ENCODE measurements at regions of chr18 and their contacts with region 1.

Region 1: GRCh38 chr18:59139371-59140298 is at the start of gene SEC11C:
- DNase-seq: peak; percentile 98 to 99 (median 98)
- H3K4me3 ChIP-seq: peak within 1 kb of the TSS; percentile 70 to 99 (median 91)
- H3K27ac ChIP-seq: peak within 1 kb of the TSS; percentile 52 to 96 (median 88)
- H3K27me3 ChIP-seq: peaks cover 0 to 5% (median 0%) of the 10 kb centered on the region in 45 donors
- CTCF ChIP-seq: peak in 15 of 56 donors; percentile 6 to 48 (median 20)
- total RNA-seq, gene SEC11C: 57.2 to 173 (median 101) TPM

Region 2: DNA sequence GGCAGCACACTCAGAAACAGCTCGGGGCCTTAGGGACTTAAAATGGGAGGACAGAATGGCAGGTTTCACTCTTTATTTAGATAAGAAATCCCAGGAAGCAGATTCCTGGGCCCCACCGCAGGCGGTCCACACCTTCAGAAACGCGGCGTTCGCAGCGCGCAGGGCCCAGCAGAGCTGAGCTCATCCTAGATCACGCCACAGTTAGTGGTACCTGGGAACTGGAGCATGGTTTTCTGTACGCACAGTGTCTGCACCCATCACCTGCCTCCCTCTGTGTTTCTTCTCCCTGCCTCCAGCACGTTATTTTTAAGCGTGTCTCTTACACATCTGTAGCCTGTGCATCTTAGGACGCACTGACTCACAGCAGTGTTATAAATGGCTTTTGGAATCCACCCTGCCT is 752.9 kb before region 1 on chr18:
- intact Hi-C with region 1: no loop called
- DNase-seq: peak in 4 of 10 donors; percentile 39 to 70 (median 48)
- H3K4me3 ChIP-seq: no peak overlapping the region
- H3K27ac ChIP-seq: peak overlapping the region in 41 of 59 donors; percentile 3 to 81 (median 48)
- H3K27me3 ChIP-seq: no peaks in the 10 kb centered on the region
- CTCF ChIP-seq: no peak

Region 3: DNA sequence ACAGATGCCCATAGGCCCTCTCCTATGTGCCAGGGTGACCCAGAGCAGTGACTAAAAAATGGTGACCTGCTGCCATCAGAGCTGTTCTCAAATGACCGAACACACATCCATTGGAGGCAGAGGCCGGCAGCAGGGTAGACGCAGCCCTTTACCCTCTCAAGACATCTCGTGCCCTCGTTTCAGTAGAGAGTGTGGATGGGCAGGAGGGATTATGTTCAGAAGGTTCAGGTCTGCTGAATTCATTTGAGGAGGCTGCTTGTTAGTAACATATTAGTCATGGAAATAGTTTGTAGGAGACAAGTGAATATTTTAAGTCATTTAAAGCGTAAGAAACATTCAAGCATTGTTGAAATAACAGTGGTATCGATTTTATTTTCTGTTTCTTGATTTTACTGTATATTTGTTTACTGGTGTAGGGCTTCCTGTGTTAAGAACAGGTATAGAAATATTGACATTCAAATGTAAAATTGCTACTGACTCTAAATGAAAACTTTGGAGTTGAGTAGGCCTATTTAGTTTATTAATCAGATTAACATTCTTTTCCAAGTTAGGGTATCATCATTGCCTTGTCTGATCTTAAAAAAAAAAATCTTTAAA is 192.4 kb before region 1 on chr18:
- intact Hi-C with region 1: no loop called
- DNase-seq: no peak
- H3K4me3 ChIP-seq: no peak overlapping the region
- H3K27ac ChIP-seq: peak overlapping the region in 1 of 59 donors; percentile 8
- H3K27me3 ChIP-seq: no peaks in the 10 kb centered on the region
- CTCF ChIP-seq: no peak

Region 4: DNA sequence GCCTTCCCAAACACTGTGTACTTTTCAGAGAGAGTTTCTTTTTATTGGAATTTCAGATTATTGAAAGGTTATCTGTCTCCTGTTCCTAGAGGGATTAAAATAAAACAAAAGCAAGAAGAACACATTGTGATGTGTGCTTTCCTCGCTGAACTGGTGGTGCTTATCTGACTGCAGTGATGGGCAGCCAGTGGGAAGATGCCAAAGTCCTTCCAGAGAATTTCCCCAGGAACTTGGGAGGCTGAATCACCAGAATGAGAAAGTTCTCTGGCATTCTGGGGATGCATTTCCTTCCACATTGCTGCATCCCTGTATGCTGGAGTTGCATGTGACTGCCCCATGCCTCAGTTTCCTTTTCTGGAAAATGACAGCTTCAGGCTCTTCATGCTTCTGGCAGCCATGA is 53.8 kb before region 1 on chr18:
- intact Hi-C with region 1: loop called (anchors 2 to 5 kb)
- DNase-seq: no peak
- H3K4me3 ChIP-seq: no peak overlapping the region
- H3K27ac ChIP-seq: no peak overlapping the region
- H3K27me3 ChIP-seq: no peaks in the 10 kb centered on the region
- CTCF ChIP-seq: no peak

Region 5: GRCh38 chr18:59093668-59094067 is 46.0 kb before region 1 on chr18:
- intact Hi-C with region 1: loop called in 1 of 2 experiments (anchors 5 kb)
- DNase-seq: no peak
- H3K4me3 ChIP-seq: no peak overlapping the region
- H3K27ac ChIP-seq: no peak overlapping the region
- H3K27me3 ChIP-seq: no peaks in the 10 kb centered on the region
- CTCF ChIP-seq: no peak

Region 6: DNA sequence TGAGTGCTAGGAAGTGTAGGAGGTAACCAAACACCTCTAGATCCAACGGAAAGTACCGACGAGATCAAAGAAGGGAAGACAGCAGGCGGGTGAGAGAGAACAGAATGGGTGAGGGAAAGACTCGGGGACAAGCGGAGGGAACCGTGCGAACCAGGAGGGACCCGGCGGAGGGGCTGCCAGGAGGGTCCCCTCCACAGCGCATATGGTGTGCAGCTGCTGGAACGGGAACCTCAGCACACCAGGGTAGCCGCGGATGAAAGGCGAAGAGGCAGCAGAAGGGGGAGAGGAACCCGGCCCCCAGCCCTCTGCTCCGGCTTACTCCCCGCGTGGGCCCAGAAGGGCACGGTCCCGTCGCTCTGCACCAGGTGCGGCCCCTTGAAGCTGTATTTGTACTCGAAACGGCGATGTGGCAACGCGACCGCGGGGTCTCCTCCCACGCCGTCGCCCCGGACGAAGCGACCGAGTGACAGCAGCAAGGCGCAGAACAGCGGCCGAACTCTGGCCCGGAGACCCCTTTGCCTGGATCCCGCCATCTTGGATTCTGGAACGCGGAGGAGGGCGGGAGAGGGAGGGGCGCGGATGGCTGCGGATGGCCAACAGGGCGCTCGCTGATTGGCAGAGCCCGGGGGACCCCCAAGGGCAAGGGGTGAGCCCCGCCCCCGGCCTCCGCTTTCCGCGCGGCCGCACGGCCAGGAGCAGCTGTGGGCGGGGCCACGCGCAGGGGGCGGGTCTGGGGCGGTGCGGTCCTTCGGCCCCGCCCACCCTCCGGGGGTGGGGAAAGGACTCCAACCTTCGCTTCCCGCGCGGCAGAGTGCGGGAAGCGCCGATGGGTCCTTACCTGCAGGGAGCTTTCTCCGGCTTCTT is 219.3 kb after region 1 on chr18 and contains the start of gene LMAN1:
- intact Hi-C with region 1: loop called in 1 of 2 experiments (anchors 2 kb)
- DNase-seq: peak; percentile 92 to 98 (median 94)
- H3K4me3 ChIP-seq: peak within 1 kb of the TSS; percentile 61 to 99 (median 91)
- H3K27ac ChIP-seq: peak within 1 kb of the TSS in 57 of 59 donors; percentile 46 to 93 (median 84)
- H3K27me3 ChIP-seq: no peaks in the 10 kb centered on the region
- CTCF ChIP-seq: peak in 7 of 56 donors; percentile 4 to 37 (median 15)
- total RNA-seq, gene LMAN1: 22.1 to 57.5 (median 32.6) TPM